Adrenal gland (tissue), 19 donors: ENCODE measurements at regions of chr1 and their contacts with region 1.

Region 1: DNA sequence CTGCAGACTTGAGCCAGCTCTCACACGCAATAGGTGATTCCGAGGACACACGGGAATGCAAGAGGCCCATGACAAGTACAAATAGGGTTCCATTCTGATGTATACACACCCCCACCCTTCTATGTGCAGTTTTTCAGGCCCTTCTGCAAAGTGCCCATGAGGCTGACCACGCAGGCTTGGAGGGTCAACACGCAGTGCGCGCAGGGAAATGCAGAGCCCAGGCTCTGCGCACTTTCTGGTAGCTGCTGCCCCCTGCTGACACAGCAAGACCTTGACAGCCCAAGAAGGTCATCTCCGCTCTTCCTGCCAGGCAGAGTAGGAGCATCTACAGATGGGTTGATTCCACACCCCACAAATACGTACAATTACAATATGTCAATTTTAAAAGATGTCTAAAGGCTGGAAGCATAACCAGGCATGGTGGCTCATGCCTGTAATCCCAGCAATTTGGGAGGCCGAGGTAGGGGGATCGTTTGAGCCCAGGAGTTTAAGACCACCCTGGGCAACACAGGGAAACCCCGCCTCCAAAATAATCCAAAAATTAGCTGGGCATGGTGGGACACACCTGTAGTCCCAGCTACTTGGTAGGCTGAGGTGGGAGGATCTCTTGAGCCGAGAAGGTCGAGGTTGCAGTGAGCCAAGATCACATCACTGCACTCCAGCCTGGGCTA is 18.5 kb downstream of the SH3BP5L start:
- DNase-seq: peak; percentile 48 to 77 (median 67)
- H3K4me3 ChIP-seq: no peak overlapping the region
- H3K27ac ChIP-seq: no peak overlapping the region
- H3K4me1 ChIP-seq: peaks cover 0 to 5% of the 10 kb centered on the region in 2 donors
- H3K27me3 ChIP-seq: no peaks in the 10 kb centered on the region
- CTCF ChIP-seq: peak; percentile 49 to 86 (median 77)
- POLR2A ChIP-seq: no peak

Region 2: DNA sequence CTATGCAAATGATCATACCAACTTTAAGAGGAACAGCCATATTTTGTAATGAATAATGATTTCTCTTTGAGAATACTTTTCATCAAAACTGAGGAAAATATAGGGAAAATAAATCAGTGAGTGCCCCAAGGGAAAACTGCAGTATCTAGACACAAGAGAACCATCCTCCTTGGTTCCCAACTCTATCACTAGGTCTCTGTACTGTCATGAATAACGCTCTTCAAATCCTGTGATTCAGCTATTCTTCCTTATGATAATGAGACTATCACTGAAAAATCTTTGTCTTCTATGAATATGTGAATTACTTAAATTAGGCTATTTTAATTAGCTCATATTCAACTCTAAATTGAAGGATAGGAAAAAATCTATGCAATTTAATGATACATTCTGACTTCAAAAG is 791.4 kb before region 1 on chr1:
- intact Hi-C with region 1: no loop called
- DNase-seq: no peak
- H3K4me3 ChIP-seq: no peak overlapping the region
- H3K27ac ChIP-seq: no peak overlapping the region
- H3K4me1 ChIP-seq: no peaks in the 10 kb centered on the region
- H3K27me3 ChIP-seq: no peaks in the 10 kb centered on the region
- CTCF ChIP-seq: no peak
- POLR2A ChIP-seq: no peak

Region 3: DNA sequence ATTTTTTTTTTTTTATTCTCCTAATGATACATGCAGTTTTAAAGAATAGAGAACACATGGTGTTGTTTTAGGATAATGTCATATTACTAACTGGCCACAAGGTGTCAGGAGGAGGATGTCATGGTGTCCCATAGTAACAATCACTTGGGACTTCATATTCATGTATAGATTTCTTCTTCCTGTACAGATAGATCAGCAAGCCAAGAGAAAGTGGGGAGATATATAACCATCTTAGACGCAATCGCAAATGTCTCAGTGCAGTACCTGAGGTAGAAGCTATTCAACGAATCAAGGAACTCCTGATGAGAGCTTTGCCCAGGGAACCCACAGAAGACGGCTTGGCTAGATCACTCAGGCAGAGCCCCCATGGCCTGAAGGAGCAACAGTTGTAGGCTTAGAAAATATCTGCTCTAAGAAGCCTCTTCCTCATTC is 184.6 kb before region 1 on chr1:
- intact Hi-C with region 1: loop called (anchors 5 kb)
- DNase-seq: peak in 1 of 7 donors; percentile 1
- H3K4me3 ChIP-seq: no peak overlapping the region
- H3K27ac ChIP-seq: no peak overlapping the region
- H3K4me1 ChIP-seq: no peaks in the 10 kb centered on the region
- H3K27me3 ChIP-seq: no peaks in the 10 kb centered on the region
- CTCF ChIP-seq: peak; percentile 40 to 64 (median 50)
- POLR2A ChIP-seq: no peak